ENCODE measurements at regions of chr7 and their contacts with region 1.

Region 1: DNA sequence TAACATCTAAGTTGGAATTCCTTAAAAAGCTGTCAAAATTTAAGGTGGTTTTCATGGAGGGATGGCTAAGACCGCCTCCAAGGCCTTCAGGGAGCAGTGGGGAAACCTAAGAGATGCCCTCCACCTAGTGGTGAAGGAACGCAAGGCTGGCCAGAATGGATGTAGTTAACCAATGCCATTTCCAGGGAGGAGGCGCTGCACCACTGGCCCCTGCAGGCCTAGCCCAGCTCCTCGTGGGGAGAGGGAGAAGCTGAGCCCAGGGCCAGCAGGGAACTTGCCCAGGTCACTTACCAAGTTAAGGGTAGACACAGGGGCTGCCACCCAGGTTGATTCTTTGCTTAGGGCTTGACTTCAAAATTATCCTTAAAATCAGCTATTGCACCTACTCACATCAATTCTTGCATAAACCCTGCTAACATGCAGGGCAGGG is 32.0 kb downstream of the FIGNL1 start:
- DNase-seq: peak; percentile 75 to 90 (median 79)
- ATAC-seq: peak; percentile 100
- H3K4me3 ChIP-seq: no peak overlapping the region
- H3K27ac ChIP-seq: no peak overlapping the region
- H3K4me1 ChIP-seq: peaks cover 0 to 2% of the 10 kb centered on the region in 2 experiments; a peak in 1 of 5 replicates
- H3K27me3 ChIP-seq: 0 out of 5 replicates have a peak, but pooled peaks cover 0 to 2% of the 10 kb centered on the region in 2 experiments
- CTCF ChIP-seq: peak; percentile 98 to 99 (median 99)
- EP300 ChIP-seq: no peak
- POLR2A ChIP-seq: no peak
- RAD21 ChIP-seq: peak; percentile 94 to 98

Region 2: DNA sequence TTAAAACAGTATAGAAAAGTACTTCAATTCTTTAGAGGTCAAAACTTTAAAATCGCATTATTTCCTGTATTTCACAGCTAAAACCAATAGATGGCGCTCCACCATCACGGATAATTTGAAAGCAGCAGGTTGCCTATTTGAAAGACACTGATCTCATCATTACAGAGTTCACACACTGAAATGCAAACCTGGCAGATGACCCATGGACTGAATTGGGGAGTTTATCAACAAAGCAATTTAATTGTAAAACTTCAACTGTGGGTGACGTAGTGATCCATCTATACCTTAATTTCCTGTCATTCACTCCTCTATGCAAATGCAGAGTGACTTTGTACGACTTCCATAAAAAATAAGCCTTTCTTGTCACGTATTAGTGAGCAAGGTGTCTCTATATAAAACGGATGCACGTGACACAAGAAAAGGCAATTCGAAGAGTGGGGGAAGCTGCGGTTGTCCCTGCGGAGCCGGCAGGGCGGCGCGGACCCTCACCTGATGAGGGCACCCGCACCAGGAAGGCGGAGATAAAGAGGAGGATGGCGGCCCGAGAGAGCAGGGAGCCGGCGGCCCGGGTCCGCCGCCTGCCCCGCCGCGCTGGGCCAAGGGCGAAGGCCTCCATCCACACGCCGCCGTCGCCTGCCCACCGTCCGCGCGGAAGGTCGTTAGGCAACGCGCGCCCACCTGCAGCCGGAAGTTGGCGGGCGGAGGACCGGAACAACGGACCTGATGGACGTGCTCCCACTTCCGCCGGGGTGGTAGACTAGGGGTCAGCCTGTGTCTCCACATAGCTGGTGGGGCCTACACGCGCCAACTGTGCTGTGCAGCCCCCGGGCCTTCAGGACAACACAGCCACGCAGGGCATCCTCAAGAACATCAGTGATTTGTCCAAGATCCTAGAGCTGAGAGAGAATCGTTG is 325.3 kb before region 1 on chr7 and contains the start of gene ZPBP:
- CTCF ChIA-PET with region 1: interaction called, 3 read pairs
- POLR2A ChIA-PET with region 1: no interaction called
- in situ Hi-C with region 1: no loop called
- intact Hi-C with region 1: loop called (anchors 1 kb)
- DNase-seq: peak; percentile 24 to 55 (median 28)
- ATAC-seq: peak; percentile 78
- H3K4me3 ChIP-seq: no peak within 1 kb of the TSS
- H3K27ac ChIP-seq: no peak within 1 kb of the TSS
- H3K4me1 ChIP-seq: peaks cover 0 to 5% of the 10 kb centered on the region in 2 experiments; a peak in 1 of 5 replicates
- H3K27me3 ChIP-seq: peaks cover 0 to 7% of the 10 kb centered on the region in 2 experiments; a peak in 1 of 5 replicates
- CTCF ChIP-seq: peak; percentile 56 to 86 (median 64)
- EP300 ChIP-seq: no peak
- POLR2A ChIP-seq: no peak
- RAD21 ChIP-seq: peak; percentile 79 to 80
- polyA plus RNA-seq, gene ZPBP: not detected

Region 3: DNA sequence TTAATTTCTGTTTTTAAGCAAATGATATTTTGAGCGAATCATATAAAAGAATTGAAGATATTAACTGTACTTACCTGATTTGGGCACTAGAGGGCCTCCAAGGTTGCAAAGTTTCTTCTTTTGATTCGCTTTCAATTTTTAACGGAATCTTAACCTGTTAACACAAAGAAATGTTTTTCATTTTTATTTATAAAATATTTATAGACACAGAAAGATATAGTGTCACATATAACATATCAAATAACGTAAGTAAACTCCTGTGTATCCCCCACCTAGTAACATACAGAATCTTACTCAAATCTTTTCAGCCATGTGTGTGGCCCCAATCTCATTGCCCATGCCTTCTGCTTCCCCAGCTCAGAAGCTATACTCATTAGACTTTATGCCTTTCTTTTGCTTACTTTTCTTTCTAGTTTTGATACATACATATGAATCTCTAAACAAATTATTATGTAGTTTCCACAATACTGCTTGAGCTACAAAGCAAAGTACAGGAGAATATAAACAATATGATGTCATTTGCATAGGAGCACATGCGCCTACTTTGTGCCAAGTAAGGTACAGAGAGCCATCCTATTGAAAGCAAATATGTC is 275.6 kb before region 1 on chr7:
- CTCF ChIA-PET with region 1: interaction called, 12 read pairs
- POLR2A ChIA-PET with region 1: no interaction called
- in situ Hi-C with region 1: no loop called
- intact Hi-C with region 1: loop called (anchors 1 kb)
- DNase-seq: peak in 3 of 4 experiments; percentile 23 to 55 (median 26)
- ATAC-seq: peak; percentile 69
- H3K4me3 ChIP-seq: no peak overlapping the region
- H3K27ac ChIP-seq: no peak overlapping the region
- H3K4me1 ChIP-seq: no peaks in the 10 kb centered on the region
- H3K27me3 ChIP-seq: peaks cover 5 to 14% of the 10 kb centered on the region in 2 experiments; a peak in 2 of 5 replicates
- CTCF ChIP-seq: peak; percentile 40 to 82 (median 45); a peak in 3 of 6 replicates
- EP300 ChIP-seq: 0 out of 2 replicates have a peak, but pooled peaks have one; percentile 3
- POLR2A ChIP-seq: no peak
- RAD21 ChIP-seq: peak; percentile 76 to 78

Region 4: GRCh38 chr7:50304911-50305582 is 113.1 kb before region 1 on chr7:
- CTCF ChIA-PET with region 1: no interaction called
- POLR2A ChIA-PET with region 1: no interaction called
- in situ Hi-C with region 1: no loop called
- intact Hi-C with region 1: loop called (anchors 5 kb)
- DNase-seq: peak in 1 of 4 experiments; percentile 67
- ATAC-seq: peak; percentile 55
- H3K4me3 ChIP-seq: peak overlapping the region; percentile 70
- H3K27ac ChIP-seq: peak overlapping the region; percentile 80
- H3K4me1 ChIP-seq: peaks cover 20 to 24% of the 10 kb centered on the region in 2 experiments
- H3K27me3 ChIP-seq: no peaks in the 10 kb centered on the region
- CTCF ChIP-seq: 0 out of 6 replicates have a peak, but pooled peaks of 1 of the 3 experiments have one; percentile 0
- EP300 ChIP-seq: no peak
- POLR2A ChIP-seq: no peak
- RAD21 ChIP-seq: no peak